ENCODE measurements at regions of chr3 and their contacts with region 1.

Region 1: DNA sequence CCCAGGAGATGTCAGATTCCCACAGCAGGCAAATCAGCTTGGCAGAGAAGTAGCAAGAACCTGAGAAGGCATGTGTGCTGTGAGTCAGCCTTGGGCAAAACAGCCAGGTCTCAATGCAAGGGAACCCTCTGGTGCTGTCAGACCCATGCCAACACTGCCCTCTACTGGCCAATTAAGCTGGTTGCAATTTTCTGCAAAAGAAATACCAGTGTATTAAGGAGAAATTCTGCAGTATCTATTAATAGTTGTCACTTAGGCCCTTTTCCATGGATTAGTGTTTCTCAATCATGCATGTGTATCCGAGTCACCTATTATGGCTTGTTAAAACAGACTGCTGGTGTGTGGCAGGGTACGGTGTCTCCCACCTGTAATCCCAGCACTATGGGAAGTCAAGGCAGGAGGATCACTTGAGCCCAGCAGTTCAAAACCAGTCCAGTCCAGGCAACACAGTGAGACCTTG is 26.2 kb downstream of the MAP4 start:
- DNase-seq: peak; percentile 79
- ATAC-seq: peak; percentile 95

Region 2: DNA sequence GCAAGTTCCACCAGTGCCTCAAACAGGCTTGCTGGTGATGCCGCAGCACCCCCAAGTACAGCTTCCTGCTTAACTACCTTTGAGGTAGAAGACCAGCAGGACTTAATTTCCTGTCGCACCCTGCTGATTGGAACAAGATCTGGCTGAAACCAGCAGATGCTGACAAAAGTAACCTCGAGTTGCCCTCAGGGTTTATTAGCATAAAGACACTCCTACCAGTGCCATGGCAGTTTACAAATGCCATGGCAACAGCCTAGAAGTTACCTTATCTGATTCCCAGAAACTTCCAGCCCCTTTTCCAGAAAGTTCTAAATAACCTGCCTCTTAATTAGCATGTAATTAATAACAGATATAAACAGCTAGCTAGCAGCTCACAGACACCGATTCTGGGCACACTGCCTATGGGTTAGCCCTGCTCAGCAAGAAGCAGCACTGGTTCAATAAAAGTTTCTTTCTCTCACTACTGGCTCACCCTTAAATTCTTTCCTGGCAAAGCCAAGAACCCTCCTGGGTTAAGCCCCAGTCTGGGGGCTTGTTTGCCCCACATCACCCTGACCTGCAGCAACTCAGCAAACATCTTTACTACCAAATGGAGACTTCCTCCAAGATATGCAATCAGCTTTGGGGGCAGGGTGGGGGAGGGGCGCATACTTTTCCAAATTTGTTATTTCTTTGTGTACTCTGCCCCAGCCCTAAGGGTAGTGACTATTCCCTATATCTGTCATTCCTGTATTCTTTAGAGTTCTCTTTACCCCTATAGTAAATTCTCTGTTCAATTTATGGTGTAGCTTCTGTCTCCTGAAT is 28.0 kb before region 1 on chr3:
- intact Hi-C with region 1: no loop called
- DNase-seq: no peak
- ATAC-seq: peak; percentile 51

Region 3: DNA sequence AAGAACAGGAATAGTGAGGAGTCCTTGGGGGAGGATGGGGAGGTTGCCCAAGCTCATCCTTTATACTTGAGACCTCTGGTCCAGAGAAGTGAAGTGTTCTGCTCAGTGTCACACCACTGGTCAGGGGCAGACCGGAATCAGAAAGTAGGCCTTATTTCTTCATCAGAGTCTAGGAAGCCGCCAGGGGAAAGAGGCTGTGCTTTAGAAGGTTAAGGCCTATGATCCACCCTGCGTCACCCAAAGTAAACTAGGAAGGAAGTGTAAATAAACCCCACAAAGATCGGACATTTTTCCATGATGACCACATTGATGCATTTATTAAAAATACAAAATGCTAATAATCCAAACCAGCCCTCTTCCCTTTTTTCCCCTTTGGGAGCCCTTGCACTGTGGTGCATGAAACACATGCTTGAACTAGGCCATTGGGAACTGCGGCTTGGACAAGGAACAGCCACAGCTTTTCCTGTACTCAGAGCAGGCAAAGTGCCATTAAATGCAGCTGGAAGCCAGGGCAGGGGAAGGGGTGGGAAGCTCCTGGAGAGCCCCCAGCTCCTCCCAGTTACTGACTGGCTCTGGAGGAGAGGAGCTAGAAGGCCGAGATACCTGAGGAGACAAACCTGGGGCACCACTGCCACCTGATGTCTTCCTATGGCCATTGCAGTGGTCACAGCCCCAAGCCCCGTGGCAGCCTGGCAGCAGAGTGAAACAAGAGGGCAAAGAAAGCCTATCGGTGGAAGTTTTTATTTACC is 161.2 kb after region 1 on chr3:
- intact Hi-C with region 1: loop called (anchors 10 kb)
- DNase-seq: peak; percentile 80
- ATAC-seq: peak; percentile 96

Region 4: GRCh38 chr3:48273594-48274211 is 283.7 kb after region 1 on chr3:
- intact Hi-C with region 1: no loop called
- DNase-seq: no peak
- ATAC-seq: peak; percentile 52

Measured in sciatic nerve (tissue), 2 donors.